Uterus (tissue), 4 donors: ENCODE measurements at regions of chr5 and their contacts with region 1.

Region 1: GRCh38 chr5:170432669-170433068 is 43.5 kb upstream of the KCNMB1 start:
- DNase-seq: no peak
- H3K4me3 ChIP-seq: no peak overlapping the region
- H3K27ac ChIP-seq: no peak overlapping the region
- H3K4me1 ChIP-seq: no peaks in the 10 kb centered on the region
- H3K27me3 ChIP-seq: no peaks in the 10 kb centered on the region
- CTCF ChIP-seq: no peak
- POLR2A ChIP-seq: no peak

Region 2: DNA sequence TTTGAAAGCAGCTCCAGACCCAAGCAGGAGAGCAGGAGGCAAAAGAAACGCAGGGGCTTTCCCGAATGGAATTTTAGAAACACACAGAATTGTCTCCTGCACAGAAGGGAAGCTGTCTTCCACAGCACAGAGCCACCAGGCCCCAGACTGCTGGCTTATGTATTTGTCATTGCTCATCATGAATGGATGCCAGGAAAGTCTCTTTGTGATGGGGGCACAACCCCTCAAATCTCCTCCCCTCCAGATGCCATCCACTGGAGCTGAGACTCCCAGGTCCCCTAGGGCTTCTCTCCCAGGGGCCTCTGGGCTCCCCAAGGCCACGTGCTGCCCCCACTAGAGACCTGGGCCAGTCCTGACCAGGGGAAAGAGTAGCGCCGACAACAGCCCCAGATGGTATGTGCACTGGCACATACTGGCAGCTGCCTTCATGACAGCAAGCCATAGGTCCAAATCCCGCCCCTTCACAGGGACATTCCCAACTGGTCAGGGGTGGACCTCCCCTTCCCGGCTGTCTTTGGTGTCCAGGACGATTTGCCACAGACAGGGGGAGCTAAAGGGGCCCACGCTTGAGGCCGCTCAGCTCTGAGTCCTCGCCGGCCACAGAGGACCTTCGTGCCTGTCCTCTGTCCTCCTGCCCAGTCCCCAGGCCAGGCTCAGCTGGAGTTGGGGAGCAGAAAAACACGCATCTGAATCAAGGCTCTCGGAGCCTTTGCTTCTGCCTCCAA is 199.0 kb after region 1 on chr5:
- intact Hi-C with region 1: loop called (anchors 2 kb)
- DNase-seq: no peak
- H3K4me3 ChIP-seq: no peak overlapping the region
- H3K27ac ChIP-seq: peak overlapping the region in 1 of 2 donors; percentile 40
- H3K4me1 ChIP-seq: peaks cover 0 to 9% of the 10 kb centered on the region in 2 donors
- H3K27me3 ChIP-seq: no peaks in the 10 kb centered on the region
- CTCF ChIP-seq: no peak
- POLR2A ChIP-seq: no peak